GM12878 (cell line): ENCODE measurements at regions of chr6 and their contacts with region 1.

Region 1: DNA sequence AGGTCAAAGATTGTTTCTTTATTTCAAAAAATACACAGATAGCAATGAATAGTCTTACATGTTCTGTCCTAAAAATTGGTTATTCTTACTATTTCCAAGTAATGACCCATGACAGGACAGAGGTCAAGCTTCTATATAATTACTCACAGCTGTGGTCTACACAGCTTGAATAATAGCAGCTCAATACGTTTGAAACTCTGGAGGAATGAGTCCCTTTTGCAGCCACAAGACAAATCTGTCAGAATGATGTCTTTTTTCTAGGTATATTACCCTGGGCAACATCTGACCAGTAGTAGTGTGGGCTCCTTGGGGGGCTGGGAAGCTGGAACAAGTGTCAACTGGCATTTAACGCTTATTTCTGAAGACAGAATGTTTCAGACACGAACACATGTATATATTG is 84.9 kb upstream of the HTR1B start:
- DNase-seq: no peak
- ATAC-seq: peak; percentile 69
- H3K4me3 ChIP-seq: no peak overlapping the region
- H3K27ac ChIP-seq: no peak overlapping the region
- H3K4me1 ChIP-seq: no peaks in the 10 kb centered on the region
- H3K27me3 ChIP-seq: no peaks in the 10 kb centered on the region
- CTCF ChIP-seq: no peak
- EP300 ChIP-seq: no peak
- POLR2A ChIP-seq: no peak
- RAD21 ChIP-seq: no peak

Region 2: DNA sequence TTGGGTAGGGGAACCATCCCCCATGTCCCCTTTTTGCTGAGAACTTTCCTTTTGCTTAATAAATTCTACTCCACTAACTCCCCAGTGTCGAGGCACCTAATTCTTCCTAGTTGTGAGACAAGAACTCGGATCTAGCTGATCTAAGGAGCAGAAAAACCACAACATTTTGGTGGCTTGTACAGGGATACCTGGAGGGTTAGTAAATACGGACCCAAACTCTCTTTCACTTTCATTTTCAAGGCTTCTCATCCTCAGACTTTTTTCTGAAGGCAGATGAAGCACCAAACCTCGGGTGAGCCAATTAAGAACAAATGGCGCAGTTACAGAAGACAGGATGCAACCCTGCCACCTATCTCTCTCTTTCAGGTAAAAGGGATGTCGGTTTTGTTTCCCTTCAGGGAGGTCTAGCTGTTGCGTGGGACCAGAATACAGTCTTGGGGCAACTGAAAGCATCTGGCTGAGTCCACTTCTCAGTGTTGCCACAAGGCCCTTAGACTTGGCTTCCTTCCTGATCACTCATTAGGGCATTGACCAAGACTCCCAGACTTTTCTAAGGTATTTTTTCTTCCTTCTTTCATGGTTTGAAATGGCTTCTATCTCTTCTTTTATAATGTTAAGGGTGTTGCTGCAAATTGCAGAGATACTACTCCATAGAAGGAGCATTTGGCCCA is 73.8 kb before region 1 on chr6:
- CTCF ChIA-PET with region 1: interaction called, 3 read pairs
- POLR2A ChIA-PET with region 1: interaction called, 43 read pairs
- RAD21 ChIA-PET with region 1: interaction called, 238 read pairs
- SMC1A ChIA-PET with region 1: interaction called, 48 read pairs
- in situ Hi-C with region 1: no loop called
- intact Hi-C with region 1: loop called (anchors 5 kb)
- DNase-seq: no peak
- ATAC-seq: peak; percentile 58
- H3K4me3 ChIP-seq: 0 out of 2 replicates have a peak overlapping the region, but pooled peaks have one; percentile 24
- H3K27ac ChIP-seq: no peak overlapping the region
- H3K4me1 ChIP-seq: no peaks in the 10 kb centered on the region
- H3K27me3 ChIP-seq: no peaks in the 10 kb centered on the region; a peak in 1 of 4 replicates
- CTCF ChIP-seq: no peak
- EP300 ChIP-seq: no peak
- POLR2A ChIP-seq: no peak
- RAD21 ChIP-seq: no peak

Region 3: GRCh38 chr6:77535172-77535571 is 13.0 kb before region 1 on chr6:
- CTCF ChIA-PET with region 1: interaction called, 6 read pairs
- POLR2A ChIA-PET with region 1: interaction called, 10 read pairs
- RAD21 ChIA-PET with region 1: interaction called, 61 read pairs
- SMC1A ChIA-PET with region 1: interaction called, 524 read pairs
- in situ Hi-C with region 1: no loop called
- intact Hi-C with region 1: no loop called
- DNase-seq: no peak
- ATAC-seq: peak; percentile 15; the same call in 2 of the 3 replicates
- H3K4me3 ChIP-seq: no peak overlapping the region
- H3K27ac ChIP-seq: no peak overlapping the region
- H3K4me1 ChIP-seq: no peaks in the 10 kb centered on the region
- H3K27me3 ChIP-seq: no peaks in the 10 kb centered on the region
- CTCF ChIP-seq: no peak
- EP300 ChIP-seq: no peak
- POLR2A ChIP-seq: no peak
- RAD21 ChIP-seq: no peak

Region 4: DNA sequence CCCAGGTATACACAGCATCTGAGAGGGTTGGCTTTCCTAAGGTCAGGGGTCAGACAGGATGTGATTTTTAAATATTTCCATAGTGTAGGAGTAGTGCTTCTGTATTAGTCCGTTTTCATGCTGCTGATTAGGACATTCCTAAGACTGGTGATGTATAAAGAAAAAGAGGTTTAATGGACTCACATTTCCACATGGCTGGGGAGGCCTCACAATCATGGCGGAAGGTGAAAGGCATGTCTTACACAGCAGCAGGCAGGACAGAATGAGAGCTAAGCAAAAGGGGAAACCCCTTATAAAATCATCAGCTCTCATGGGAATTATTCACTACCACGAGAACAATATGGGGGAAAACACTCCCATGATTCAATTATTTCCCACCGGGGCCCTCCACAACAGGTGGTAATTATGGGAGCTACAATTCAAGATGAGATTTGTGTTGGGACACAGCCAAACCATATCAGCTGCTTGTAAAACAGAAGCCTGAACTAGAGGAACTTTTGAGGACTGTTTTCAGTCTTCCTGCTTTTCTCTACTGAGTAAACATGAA is 13.7 kb after region 1 on chr6:
- CTCF ChIA-PET with region 1: interaction called, 96 read pairs
- POLR2A ChIA-PET with region 1: interaction called, 270 read pairs
- RAD21 ChIA-PET with region 1: interaction called, 315 read pairs
- SMC1A ChIA-PET with region 1: interaction called, 524 read pairs
- in situ Hi-C with region 1: no loop called
- intact Hi-C with region 1: no loop called
- DNase-seq: no peak
- ATAC-seq: peak; percentile 50
- H3K4me3 ChIP-seq: no peak overlapping the region
- H3K27ac ChIP-seq: no peak overlapping the region
- H3K4me1 ChIP-seq: no peaks in the 10 kb centered on the region
- H3K27me3 ChIP-seq: no peaks in the 10 kb centered on the region
- CTCF ChIP-seq: no peak
- EP300 ChIP-seq: no peak
- POLR2A ChIP-seq: no peak
- RAD21 ChIP-seq: no peak

Region 5: DNA sequence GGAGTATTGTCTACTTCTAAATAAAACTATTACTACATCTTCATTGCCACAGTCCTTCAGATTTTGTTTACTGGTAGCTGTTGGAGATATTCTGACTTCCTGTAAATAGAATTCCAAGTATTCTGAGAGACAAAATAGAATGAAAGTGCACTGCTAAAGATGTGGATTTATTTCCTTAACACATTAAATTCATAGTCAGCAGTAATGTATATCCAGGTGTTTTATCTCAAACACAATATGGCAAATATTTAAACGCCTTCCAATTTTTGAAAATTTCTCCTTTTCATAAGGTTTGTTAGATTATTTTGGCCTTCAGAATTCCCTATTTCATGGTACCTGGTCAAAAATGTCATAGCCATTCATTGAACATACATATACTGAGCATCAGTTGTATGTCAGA is 20.4 kb after region 1 on chr6:
- CTCF ChIA-PET with region 1: interaction called, 96 read pairs
- POLR2A ChIA-PET with region 1: interaction called, 270 read pairs
- RAD21 ChIA-PET with region 1: interaction called, 315 read pairs
- SMC1A ChIA-PET with region 1: interaction called, 524 read pairs
- in situ Hi-C with region 1: no loop called
- intact Hi-C with region 1: no loop called
- DNase-seq: no peak
- ATAC-seq: no peak
- H3K4me3 ChIP-seq: no peak overlapping the region
- H3K27ac ChIP-seq: no peak overlapping the region
- H3K4me1 ChIP-seq: no peaks in the 10 kb centered on the region
- H3K27me3 ChIP-seq: no peaks in the 10 kb centered on the region
- CTCF ChIP-seq: no peak
- EP300 ChIP-seq: no peak
- POLR2A ChIP-seq: no peak
- RAD21 ChIP-seq: no peak

Region 6: DNA sequence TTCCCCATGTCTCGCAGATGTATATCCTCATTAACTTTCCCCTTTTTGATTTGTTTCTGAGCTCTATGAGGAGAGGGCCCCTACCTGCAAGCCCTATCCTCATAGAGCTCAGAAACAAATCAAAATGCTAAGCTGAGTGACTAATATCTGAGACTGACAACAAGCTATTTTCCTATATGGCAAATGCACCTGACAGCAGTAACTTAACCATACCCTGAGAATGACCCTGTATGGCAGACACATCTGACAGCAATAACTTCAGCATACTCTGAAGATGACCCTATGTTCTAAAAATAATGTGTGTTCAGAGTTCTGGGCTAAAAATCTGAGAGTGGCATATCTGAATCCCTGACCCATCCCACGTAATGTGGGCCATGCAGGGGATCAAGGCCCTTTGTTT is 25.7 kb after region 1 on chr6:
- CTCF ChIA-PET with region 1: interaction called, 3 read pairs
- POLR2A ChIA-PET with region 1: interaction called, 5 read pairs
- RAD21 ChIA-PET with region 1: interaction called, 14 read pairs
- SMC1A ChIA-PET with region 1: interaction called, 8 read pairs
- in situ Hi-C with region 1: no loop called
- intact Hi-C with region 1: no loop called
- DNase-seq: no peak
- ATAC-seq: peak; percentile 55
- H3K4me3 ChIP-seq: no peak overlapping the region
- H3K27ac ChIP-seq: no peak overlapping the region
- H3K4me1 ChIP-seq: no peaks in the 10 kb centered on the region
- H3K27me3 ChIP-seq: no peaks in the 10 kb centered on the region
- CTCF ChIP-seq: no peak
- EP300 ChIP-seq: no peak
- POLR2A ChIP-seq: no peak
- RAD21 ChIP-seq: no peak